Mammary epithelial cell (primary cell): ENCODE measurements at regions of chr20 and their contacts with region 1.

Region 1: DNA sequence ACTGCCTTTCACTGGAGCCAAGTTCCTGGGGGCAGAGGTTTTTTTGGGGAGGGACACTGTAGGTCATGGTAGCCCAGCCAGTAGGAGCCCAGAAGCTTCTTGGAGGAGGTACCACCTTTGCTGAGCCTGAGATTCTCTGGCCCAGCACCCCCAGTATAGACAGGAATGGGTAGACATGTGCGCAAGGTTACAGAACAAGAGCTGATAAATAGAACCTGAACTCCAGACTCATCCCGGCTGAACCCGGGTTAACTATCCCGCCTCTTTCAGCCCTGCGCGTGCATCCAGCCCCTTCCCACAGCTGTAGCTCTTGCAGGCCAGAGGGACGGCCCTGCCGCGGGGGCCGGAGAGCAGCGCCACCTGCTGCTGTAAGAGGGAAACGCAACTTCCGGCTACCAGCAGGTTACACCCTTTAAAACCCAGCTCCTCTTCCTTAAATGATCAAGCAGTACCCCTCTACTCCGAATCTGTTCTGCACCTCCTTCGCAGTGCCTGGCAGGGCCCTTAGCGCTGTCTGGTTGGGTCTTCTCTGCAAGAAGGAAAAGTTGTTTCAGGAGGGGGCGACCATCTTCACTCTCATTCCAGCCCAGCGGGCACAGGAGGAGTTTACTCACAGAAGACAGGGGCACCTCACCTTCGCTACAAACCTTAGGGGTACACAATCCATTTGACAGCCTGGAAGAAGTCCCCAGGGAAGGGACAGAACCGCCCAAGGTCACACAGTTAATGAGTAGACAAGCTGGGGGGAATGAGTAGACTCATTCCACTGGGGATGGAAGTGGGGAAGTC is 7.5 kb downstream of the SRXN1 start:
- DNase-seq: peak; percentile 35
- H3K4me3 ChIP-seq: no peak overlapping the region
- H3K27ac ChIP-seq: no peak overlapping the region
- H3K4me1 ChIP-seq: no peaks in the 10 kb centered on the region
- H3K27me3 ChIP-seq: peaks cover 4% of the 10 kb centered on the region
- CTCF ChIP-seq: peak; percentile 72 to 95

Region 2: GRCh38 chr20:496126-496696 is 149.3 kb before region 1 on chr20:
- CTCF ChIA-PET with region 1: no interaction called
- dilution Hi-C with region 1: loop called (anchors 10 kb)
- in situ Hi-C with region 1: no loop called
- intact Hi-C with region 1: no loop called
- DNase-seq: no peak
- H3K4me3 ChIP-seq: no peak overlapping the region
- H3K27ac ChIP-seq: no peak overlapping the region
- H3K4me1 ChIP-seq: no peaks in the 10 kb centered on the region
- H3K27me3 ChIP-seq: no peaks in the 10 kb centered on the region
- CTCF ChIP-seq: no peak

Region 3: GRCh38 chr20:555933-556526 is 89.5 kb before region 1 on chr20:
- CTCF ChIA-PET with region 1: no interaction called
- dilution Hi-C with region 1: loop called (anchors 5 kb)
- in situ Hi-C with region 1: loop called in 1 of 2 experiments (anchors 5 kb)
- intact Hi-C with region 1: loop called (anchors 1 kb)
- DNase-seq: no peak
- H3K4me3 ChIP-seq: no peak overlapping the region
- H3K27ac ChIP-seq: no peak overlapping the region
- H3K4me1 ChIP-seq: no peaks in the 10 kb centered on the region
- H3K27me3 ChIP-seq: no peaks in the 10 kb centered on the region
- CTCF ChIP-seq: no peak

Region 4: GRCh38 chr20:561437-562231 is 83.9 kb before region 1 on chr20:
- CTCF ChIA-PET with region 1: interaction called, 6 read pairs
- dilution Hi-C with region 1: loop called (anchors 5 kb)
- in situ Hi-C with region 1: loop called in 1 of 2 experiments (anchors 5 kb)
- intact Hi-C with region 1: loop called (anchors 1 kb)
- DNase-seq: peak; percentile 50
- H3K4me3 ChIP-seq: no peak overlapping the region
- H3K27ac ChIP-seq: no peak overlapping the region
- H3K4me1 ChIP-seq: no peaks in the 10 kb centered on the region
- H3K27me3 ChIP-seq: no peaks in the 10 kb centered on the region
- CTCF ChIP-seq: peak; percentile 97 to 100

Region 5: GRCh38 chr20:768426-768978 is 123.0 kb after region 1 on chr20 and contains the start of gene SLC52A3:
- CTCF ChIA-PET with region 1: no interaction called
- dilution Hi-C with region 1: loop called (anchors 5 kb)
- in situ Hi-C with region 1: no loop called
- intact Hi-C with region 1: no loop called
- DNase-seq: peak; percentile 20
- H3K4me3 ChIP-seq: no peak within 1 kb of the TSS
- H3K27ac ChIP-seq: no peak within 1 kb of the TSS
- H3K4me1 ChIP-seq: no peaks in the 10 kb centered on the region
- H3K27me3 ChIP-seq: no peaks in the 10 kb centered on the region
- CTCF ChIP-seq: peak; percentile 14 to 52
- total RNA-seq, gene SLC52A3: not detected